ENCODE measurements at regions of chr7 and their contacts with region 1.

Region 1: DNA sequence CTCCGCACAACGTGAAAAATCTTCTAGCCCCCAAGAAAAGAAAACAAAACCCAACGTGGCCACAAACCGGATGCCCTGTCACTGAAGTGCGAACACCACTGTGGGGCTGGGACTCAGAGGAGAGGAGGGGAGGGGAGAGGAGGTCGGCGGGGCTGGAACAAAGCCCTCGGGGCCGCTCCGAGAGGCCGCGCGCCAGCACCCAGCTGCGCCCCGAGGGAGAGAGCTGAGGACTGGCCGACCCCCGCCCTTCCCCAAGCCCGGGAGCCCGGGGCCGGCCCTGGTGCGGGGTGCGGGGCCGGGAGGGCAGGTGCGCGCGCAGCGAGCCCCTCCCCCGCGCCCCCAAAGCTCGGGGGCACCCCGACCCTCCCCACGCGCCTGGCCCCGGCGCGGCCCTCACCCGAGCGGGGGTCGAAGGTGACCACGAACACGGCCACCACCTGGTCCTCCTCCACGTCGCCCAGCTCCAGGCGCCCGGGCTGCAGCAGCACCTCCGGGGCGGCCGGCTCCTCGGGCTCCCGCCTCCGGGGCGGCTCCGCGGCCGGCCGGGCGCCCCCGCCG is 398 bp downstream of the DENND11 start:
- DNase-seq: peak in 1 of 2 donors; percentile 71
- H3K4me3 ChIP-seq: peak overlapping the region; percentile 84 to 99
- H3K27ac ChIP-seq: peak overlapping the region; percentile 82 to 97
- H3K4me1 ChIP-seq: peaks cover 0 to 13% of the 10 kb centered on the region in 2 donors
- H3K27me3 ChIP-seq: no peaks in the 10 kb centered on the region
- CTCF ChIP-seq: no peak

Region 2: DNA sequence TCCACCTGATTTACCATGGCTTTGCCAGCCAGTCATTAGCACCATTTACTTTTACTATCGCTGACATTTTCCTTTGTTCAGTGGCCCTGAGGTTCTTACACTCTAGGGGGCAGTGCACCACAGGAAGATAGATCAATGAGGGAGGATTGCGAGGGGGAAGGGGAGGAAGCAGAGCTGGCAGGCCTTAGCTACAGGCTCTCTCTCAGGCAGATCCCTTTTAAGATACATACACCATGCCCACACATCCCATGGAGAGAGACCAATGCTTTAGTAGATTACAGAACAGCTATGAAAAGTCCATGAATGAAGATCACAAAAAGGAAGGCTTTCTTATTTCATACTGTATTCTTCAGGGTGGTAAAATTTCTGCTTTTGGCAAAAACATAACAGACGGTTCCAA is 47.0 kb before region 1 on chr7:
- intact Hi-C with region 1: loop called (anchors 5 kb)
- DNase-seq: peak; percentile 24 to 80
- H3K4me3 ChIP-seq: no peak overlapping the region
- H3K27ac ChIP-seq: peak overlapping the region in 1 of 2 donors; percentile 13
- H3K4me1 ChIP-seq: peaks cover 0 to 5% of the 10 kb centered on the region in 2 donors
- H3K27me3 ChIP-seq: no peaks in the 10 kb centered on the region
- CTCF ChIP-seq: peak; percentile 46 to 67 (median 51)

Region 3: DNA sequence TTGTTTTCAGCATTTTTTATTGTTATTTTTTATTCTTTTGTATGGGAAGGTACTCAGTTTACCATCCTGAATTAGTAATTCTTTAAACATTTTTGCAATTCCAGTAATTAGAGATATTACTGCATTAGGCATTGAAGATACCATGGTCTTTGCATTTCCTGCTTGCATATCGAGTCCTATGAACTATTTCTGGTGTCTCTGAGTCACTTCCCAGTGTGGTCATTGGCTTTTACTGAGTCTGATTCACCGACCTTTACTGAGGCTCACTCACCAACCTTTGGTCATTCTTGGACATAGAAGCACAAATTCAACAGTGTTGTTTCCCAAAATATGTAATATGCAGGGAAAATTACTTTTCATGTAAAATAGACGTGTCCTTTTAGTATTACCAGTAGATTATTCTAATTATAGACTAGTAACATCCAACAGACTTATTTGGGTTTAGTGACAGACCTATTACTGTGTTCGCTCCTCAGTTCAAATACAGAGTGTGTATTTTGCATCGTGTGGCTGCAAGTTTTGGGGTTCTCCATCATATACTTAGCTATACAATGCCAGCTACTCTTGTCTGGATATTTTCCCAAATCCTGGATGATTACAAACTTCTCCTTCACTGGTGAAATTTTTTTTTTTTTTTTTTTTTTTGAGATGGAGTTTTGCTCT is 867.0 kb after region 1 on chr7:
- intact Hi-C with region 1: no loop called
- DNase-seq: no peak
- H3K4me3 ChIP-seq: no peak overlapping the region
- H3K27ac ChIP-seq: no peak overlapping the region
- H3K4me1 ChIP-seq: no peaks in the 10 kb centered on the region
- H3K27me3 ChIP-seq: no peaks in the 10 kb centered on the region
- CTCF ChIP-seq: no peak

Measured in ascending aorta (tissue), 2 donors.